Ascending aorta (tissue), 2 donors: ENCODE measurements at regions of chr4 and their contacts with region 1.

Region 1: DNA sequence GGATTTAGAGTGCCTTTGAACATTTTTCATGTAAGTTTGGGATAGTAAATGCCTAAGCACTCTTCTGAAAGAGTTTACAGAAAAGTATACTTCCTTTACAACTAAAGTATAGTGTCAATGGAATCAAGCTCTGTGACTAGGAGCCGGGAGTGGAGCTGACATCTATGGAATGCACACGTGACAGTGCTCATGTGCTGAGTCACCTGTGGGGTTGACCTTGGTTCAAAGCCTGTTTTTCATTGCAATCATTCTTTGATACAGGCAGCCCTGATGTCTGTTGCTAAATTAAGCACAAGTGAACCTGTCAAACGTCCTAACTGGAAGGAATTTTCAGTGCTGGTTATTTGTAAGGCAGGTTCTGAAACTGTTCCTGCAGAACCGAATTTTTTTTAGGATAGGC is 82.5 kb downstream of the GPAT3 start:
- DNase-seq: no peak
- H3K4me3 ChIP-seq: no peak overlapping the region
- H3K27ac ChIP-seq: peak overlapping the region in 1 of 2 donors; percentile 4
- H3K4me1 ChIP-seq: peaks cover 0 to 9% of the 10 kb centered on the region in 2 donors
- H3K27me3 ChIP-seq: no peaks in the 10 kb centered on the region
- CTCF ChIP-seq: no peak

Region 2: GRCh38 chr4:83535520-83536361 is 82.7 kb before region 1 on chr4 and contains the start of gene GPAT3:
- intact Hi-C with region 1: loop called (anchors 2 kb)
- DNase-seq: peak; percentile 19 to 90
- H3K4me3 ChIP-seq: peak within 1 kb of the TSS; percentile 82 to 86
- H3K27ac ChIP-seq: peak within 1 kb of the TSS; percentile 35 to 66
- H3K4me1 ChIP-seq: no peaks in the 10 kb centered on the region
- H3K27me3 ChIP-seq: no peaks in the 10 kb centered on the region
- CTCF ChIP-seq: no peak
- total RNA-seq, gene GPAT3: 1.5 TPM